ENCODE measurements at regions of chr7 and their contacts with region 1.

Region 1: DNA sequence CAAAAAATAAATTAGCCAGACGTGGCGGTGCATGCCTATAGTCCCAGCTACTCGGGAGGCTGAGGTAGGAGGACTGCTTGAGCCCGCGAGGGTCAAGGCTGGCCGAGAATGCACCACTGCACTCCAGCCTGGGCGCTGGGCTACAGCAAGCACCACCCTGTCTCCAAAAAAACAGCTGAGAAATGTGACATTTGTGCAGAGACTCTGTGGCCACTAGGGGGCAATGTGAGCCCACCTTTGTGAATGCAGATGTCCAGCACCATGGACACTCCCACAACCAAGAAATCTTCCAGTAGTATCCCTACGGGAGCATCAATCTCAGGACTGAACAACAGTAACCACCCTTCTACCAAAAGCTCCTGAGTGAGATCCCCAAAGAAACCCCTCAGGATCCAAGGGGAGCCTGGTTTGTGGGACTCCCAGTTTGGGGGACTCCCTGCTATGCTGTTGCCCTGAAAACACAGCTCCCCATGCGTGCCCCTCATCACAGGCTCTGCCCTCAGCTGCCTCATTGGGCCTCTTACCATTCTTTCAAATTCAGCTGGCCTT is 6.2 kb upstream of the AHCYL2 start:
- DNase-seq: peak; percentile 84
- ATAC-seq: peak; percentile 82
- H3K4me3 ChIP-seq: no peak overlapping the region
- H3K4me3 Mint-ChIP-seq: no peak overlapping the region
- H3K27ac ChIP-seq: no peak overlapping the region
- H3K27ac Mint-ChIP-seq: peak overlapping the region; percentile 37
- H3K4me1 ChIP-seq: peaks cover 11 to 20% of the 10 kb centered on the region in 2 donors
- H3K4me1 Mint-ChIP-seq: peaks cover 16% of the 10 kb centered on the region
- H3K27me3 ChIP-seq: no peaks in the 10 kb centered on the region
- H3K27me3 Mint-ChIP-seq: peaks cover 4% of the 10 kb centered on the region
- CTCF ChIP-seq: peak; percentile 96

Region 2: GRCh38 chr7:127959770-127960169 is 1258.8 kb before region 1 on chr7:
- CTCF ChIA-PET with region 1: no interaction called
- POLR2A ChIA-PET with region 1: no interaction called
- intact Hi-C with region 1: no loop called
- DNase-seq: no peak
- ATAC-seq: no peak
- H3K4me3 ChIP-seq: no peak overlapping the region
- H3K4me3 Mint-ChIP-seq: no peak overlapping the region
- H3K27ac ChIP-seq: no peak overlapping the region
- H3K27ac Mint-ChIP-seq: no peak overlapping the region
- H3K4me1 ChIP-seq: no peaks in the 10 kb centered on the region
- H3K4me1 Mint-ChIP-seq: peaks cover 9% of the 10 kb centered on the region
- H3K27me3 ChIP-seq: no peaks in the 10 kb centered on the region
- H3K27me3 Mint-ChIP-seq: no peaks in the 10 kb centered on the region
- CTCF ChIP-seq: no peak

Region 3: DNA sequence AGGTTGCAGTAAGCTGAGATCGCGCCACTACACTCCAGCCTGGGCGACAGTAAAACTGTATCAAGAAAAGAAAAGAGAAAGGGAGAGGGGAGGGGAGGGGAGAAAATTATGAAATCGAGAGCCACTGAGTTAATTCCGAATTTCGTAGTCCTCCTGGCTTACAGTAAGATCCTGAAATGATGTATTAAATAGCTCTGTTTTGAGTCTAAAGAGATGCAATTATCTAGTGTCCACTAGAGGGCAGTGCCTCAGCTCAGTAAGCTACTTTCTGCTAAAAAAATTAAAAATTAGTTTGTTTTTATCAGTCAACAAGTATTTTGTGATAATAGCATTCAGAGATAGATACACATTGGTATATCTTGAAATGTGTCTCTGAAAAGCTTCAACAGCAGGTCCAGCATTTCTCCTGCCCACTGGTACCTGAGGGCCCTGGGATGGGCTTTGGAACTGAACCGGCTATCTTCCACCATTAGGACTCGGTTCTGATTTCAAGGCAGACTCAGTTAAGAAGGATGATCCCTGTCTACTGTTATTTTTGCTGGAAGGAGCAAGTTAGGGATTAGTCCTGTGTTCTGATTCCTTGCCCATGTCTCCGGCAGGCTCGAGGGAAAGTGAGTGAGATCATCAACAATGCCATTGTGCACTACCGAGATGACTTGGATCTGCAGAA is 54.6 kb before region 1 on chr7:
- CTCF ChIA-PET with region 1: interaction called, 62 read pairs
- POLR2A ChIA-PET with region 1: no interaction called
- intact Hi-C with region 1: no loop called
- DNase-seq: peak; percentile 72
- ATAC-seq: no peak
- H3K4me3 ChIP-seq: no peak overlapping the region
- H3K4me3 Mint-ChIP-seq: no peak overlapping the region
- H3K27ac ChIP-seq: no peak overlapping the region
- H3K27ac Mint-ChIP-seq: peak overlapping the region; percentile 17
- H3K4me1 ChIP-seq: peaks cover 52 to 54% of the 10 kb centered on the region in 2 donors
- H3K4me1 Mint-ChIP-seq: peaks cover 74% of the 10 kb centered on the region
- H3K27me3 ChIP-seq: no peaks in the 10 kb centered on the region
- H3K27me3 Mint-ChIP-seq: no peaks in the 10 kb centered on the region
- CTCF ChIP-seq: peak; percentile 92

Region 4: DNA sequence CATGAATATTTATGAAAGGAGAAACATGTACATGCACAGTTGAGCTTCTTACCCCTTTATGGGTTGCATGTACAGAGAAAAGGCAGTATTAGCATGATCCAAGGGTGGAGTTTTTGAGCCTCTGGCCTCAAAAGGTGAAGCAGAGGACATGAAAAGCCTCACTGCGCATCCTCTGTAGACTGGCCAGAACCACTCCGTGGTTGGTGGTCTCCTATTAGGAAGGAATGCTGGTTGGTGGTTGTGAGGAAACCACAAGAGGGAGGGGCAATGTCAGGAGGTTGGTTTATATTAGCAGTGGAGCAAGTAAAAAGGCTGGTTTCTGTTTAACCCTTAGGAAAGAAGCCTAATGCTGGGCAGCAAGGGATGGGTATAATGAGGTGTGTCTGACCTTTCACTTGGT is 43.7 kb after region 1 on chr7:
- CTCF ChIA-PET with region 1: interaction called, 10 read pairs
- POLR2A ChIA-PET with region 1: interaction called, 9 read pairs
- intact Hi-C with region 1: no loop called
- DNase-seq: no peak
- ATAC-seq: no peak
- H3K4me3 ChIP-seq: no peak overlapping the region
- H3K4me3 Mint-ChIP-seq: no peak overlapping the region
- H3K27ac ChIP-seq: no peak overlapping the region
- H3K27ac Mint-ChIP-seq: no peak overlapping the region
- H3K4me1 ChIP-seq: peaks cover 11 to 12% of the 10 kb centered on the region in 2 donors
- H3K4me1 Mint-ChIP-seq: peaks cover 21% of the 10 kb centered on the region
- H3K27me3 ChIP-seq: no peaks in the 10 kb centered on the region
- H3K27me3 Mint-ChIP-seq: no peaks in the 10 kb centered on the region
- CTCF ChIP-seq: no peak

Region 5: DNA sequence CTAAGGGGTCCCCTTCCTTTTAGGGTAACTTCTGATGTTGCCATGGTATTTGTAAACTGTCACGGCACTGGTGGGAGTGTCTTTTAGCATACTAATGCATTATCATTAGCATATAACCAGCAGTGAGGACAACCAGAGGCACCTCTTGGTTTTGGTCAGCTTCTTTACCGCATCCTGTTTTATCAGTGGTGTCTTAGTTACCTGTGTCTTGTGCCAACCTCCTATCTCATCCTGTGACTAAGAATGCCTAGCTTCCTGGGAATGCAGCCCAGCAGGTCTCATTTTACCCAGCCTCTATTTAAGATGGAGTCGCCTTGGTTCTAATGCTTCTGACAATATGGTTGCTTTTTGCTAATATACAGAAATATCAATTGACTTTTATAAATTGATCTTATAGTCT is 61.2 kb after region 1 on chr7:
- CTCF ChIA-PET with region 1: interaction called, 265 read pairs
- POLR2A ChIA-PET with region 1: no interaction called
- intact Hi-C with region 1: no loop called
- DNase-seq: no peak
- ATAC-seq: no peak
- H3K4me3 ChIP-seq: no peak overlapping the region
- H3K4me3 Mint-ChIP-seq: no peak overlapping the region
- H3K27ac ChIP-seq: no peak overlapping the region
- H3K27ac Mint-ChIP-seq: no peak overlapping the region
- H3K4me1 ChIP-seq: no peaks in the 10 kb centered on the region
- H3K4me1 Mint-ChIP-seq: no peaks in the 10 kb centered on the region
- H3K27me3 ChIP-seq: no peaks in the 10 kb centered on the region
- H3K27me3 Mint-ChIP-seq: no peaks in the 10 kb centered on the region
- CTCF ChIP-seq: no peak

Region 6: DNA sequence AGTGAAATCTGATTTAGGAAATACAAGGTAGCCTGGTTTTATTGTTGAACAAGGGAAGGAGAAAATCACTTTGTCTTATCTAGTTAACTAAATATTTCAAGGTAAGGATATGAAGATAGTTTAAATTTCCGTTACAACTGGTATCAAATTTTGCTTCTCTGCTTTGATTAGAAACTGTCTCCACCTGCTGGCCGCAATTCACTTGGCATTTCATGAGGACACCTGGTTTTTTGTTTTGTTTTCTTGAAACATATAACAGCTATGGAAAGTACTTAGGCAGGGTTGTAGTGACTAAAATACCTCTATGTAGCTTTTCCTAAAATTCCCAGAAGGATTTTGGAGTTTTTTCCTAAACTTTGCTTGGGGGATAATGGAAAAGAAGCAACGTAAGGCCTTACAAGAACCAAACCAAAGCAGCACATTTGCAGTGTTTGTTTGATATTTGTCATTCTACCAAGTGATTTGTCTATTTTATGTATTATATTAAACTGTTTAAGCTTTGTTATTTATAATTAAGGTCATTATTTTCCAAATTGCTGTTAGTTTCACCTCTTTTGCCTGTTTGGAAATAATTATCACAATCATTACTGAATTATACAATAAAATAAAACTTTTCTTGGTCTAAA is 79.8 kb after region 1 on chr7:
- CTCF ChIA-PET with region 1: interaction called, 175 read pairs
- POLR2A ChIA-PET with region 1: no interaction called
- intact Hi-C with region 1: no loop called
- DNase-seq: peak; percentile 59
- ATAC-seq: no peak
- H3K4me3 ChIP-seq: no peak overlapping the region
- H3K4me3 Mint-ChIP-seq: no peak overlapping the region
- H3K27ac ChIP-seq: no peak overlapping the region
- H3K27ac Mint-ChIP-seq: no peak overlapping the region
- H3K4me1 ChIP-seq: no peaks in the 10 kb centered on the region
- H3K4me1 Mint-ChIP-seq: no peaks in the 10 kb centered on the region
- H3K27me3 ChIP-seq: no peaks in the 10 kb centered on the region
- H3K27me3 Mint-ChIP-seq: no peaks in the 10 kb centered on the region
- CTCF ChIP-seq: peak; percentile 84

Region 7: GRCh38 chr7:129376076-129376777 is 157.6 kb after region 1 on chr7:
- CTCF ChIA-PET with region 1: interaction called, 50 read pairs
- POLR2A ChIA-PET with region 1: no interaction called
- intact Hi-C with region 1: no loop called
- DNase-seq: peak; percentile 59
- ATAC-seq: peak; percentile 56
- H3K4me3 ChIP-seq: no peak overlapping the region
- H3K4me3 Mint-ChIP-seq: no peak overlapping the region
- H3K27ac ChIP-seq: no peak overlapping the region
- H3K27ac Mint-ChIP-seq: no peak overlapping the region
- H3K4me1 ChIP-seq: no peaks in the 10 kb centered on the region
- H3K4me1 Mint-ChIP-seq: peaks cover 4% of the 10 kb centered on the region
- H3K27me3 ChIP-seq: no peaks in the 10 kb centered on the region
- H3K27me3 Mint-ChIP-seq: no peaks in the 10 kb centered on the region
- CTCF ChIP-seq: peak; percentile 78

Region 8: DNA sequence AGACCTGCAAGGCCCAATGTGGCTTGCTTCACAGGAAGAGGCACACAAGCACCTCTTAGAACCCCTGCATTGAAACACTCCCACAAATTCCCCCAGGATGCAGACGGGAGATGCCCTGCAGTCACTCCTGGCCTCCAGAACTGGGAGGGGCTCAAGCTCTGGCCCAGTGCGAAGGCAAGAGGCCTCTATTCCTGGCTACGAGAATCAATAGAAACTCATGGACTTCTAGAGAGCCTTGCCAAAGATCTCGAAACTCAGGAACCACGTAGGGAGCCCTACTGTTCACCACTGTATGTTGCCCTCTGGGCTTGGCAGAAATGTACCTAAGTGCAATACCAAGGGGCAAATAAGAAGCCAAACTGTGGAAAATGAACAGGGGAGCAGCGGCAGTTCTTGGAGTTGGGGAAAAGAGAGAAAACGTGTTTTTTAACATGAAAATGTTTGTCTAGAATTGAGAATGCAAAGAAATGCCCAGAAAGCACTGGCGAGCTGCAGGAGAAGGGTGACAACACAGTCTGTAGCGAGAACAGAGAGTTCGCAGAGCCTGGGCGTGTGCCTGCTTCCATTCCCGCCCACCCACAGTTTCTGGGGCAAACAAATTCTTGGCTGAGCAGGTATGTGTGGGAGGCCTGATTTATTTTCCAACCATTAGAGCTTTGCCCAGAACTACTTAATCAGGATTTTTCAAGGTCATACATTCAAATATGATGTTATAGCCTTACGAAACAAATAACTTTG is 1776.0 kb after region 1 on chr7:
- CTCF ChIA-PET with region 1: no interaction called
- POLR2A ChIA-PET with region 1: no interaction called
- intact Hi-C with region 1: no loop called
- DNase-seq: no peak
- ATAC-seq: no peak
- H3K4me3 ChIP-seq: no peak overlapping the region
- H3K4me3 Mint-ChIP-seq: peak overlapping the region; percentile 21
- H3K27ac ChIP-seq: peak overlapping the region in 1 of 2 donors; percentile 59
- H3K27ac Mint-ChIP-seq: peak overlapping the region; percentile 38
- H3K4me1 ChIP-seq: peaks cover 56 to 63% of the 10 kb centered on the region in 2 donors
- H3K4me1 Mint-ChIP-seq: peaks cover 74% of the 10 kb centered on the region
- H3K27me3 ChIP-seq: no peaks in the 10 kb centered on the region
- H3K27me3 Mint-ChIP-seq: no peaks in the 10 kb centered on the region
- CTCF ChIP-seq: no peak

Measured in B cell (primary cell).